Activated T-helper 1 cell treated with anti-CD3 and anti-CD28 coated beads, Interleukin-12 subunit alpha, Interleukin-12 subunit beta, Interleukin-2, Interleukin-4 antibody, amounts not matched to agents 30 ng/mL and 10 ng/mL and 1 ng/mL, durations not matched to agents 14 hours and 24 hours and 36 hours (primary cell): ENCODE measurements at regions of chr12 and their contacts with region 1.

Region 1: DNA sequence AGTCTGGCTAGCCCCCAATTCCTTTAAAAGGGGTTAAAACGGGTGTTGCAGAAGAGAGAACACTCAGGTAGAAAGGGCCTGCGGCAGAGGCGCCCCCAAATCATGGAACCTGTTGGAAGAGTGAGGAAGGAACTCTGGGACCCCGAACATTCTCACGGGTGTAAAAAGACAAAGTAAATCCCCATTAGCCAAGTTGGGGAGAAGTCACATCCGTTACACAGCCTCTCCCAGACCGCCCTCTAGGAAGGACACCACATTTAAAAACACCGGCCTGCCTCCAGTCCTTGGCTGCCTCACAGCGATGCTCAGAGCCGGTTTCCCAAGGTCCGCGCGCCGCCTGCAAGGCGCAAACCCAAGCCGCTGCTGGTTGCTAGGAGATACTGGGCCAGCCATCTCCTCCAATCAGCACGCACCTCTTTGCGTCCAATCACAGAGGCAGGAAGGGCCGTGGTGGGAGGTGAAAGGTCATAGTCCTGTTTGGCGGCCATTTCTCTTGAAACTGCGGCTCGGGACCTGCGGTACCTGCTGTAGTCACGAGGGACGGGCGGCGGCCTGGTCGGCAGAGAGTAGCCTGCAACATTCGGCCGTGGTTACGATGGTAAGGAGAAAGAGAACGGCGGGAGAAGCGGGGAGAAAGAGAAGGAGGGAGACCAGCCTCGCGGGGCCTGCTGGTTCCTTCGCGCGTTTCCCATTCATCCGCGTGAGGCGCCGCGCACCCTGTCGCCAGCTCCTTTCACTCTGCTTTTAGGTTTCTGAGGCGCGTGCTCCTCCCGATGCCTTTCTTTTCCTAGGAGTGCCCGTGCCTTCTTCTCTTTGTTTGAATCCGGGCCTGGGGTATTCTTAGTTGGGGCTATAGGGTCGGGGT is at the start of gene SNRPF:
- DNase-seq: peak; percentile 93
- H3K4me3 Mint-ChIP-seq: no peak within 1 kb of the TSS
- H3K27ac Mint-ChIP-seq: no peak within 1 kb of the TSS
- H3K4me1 Mint-ChIP-seq: peaks cover 12% of the 10 kb centered on the region
- H3K27me3 Mint-ChIP-seq: peaks cover 5% of the 10 kb centered on the region
- total RNA-seq, gene SNRPF: 65.6 and 70.9 TPM in 2 replicates

Region 2: DNA sequence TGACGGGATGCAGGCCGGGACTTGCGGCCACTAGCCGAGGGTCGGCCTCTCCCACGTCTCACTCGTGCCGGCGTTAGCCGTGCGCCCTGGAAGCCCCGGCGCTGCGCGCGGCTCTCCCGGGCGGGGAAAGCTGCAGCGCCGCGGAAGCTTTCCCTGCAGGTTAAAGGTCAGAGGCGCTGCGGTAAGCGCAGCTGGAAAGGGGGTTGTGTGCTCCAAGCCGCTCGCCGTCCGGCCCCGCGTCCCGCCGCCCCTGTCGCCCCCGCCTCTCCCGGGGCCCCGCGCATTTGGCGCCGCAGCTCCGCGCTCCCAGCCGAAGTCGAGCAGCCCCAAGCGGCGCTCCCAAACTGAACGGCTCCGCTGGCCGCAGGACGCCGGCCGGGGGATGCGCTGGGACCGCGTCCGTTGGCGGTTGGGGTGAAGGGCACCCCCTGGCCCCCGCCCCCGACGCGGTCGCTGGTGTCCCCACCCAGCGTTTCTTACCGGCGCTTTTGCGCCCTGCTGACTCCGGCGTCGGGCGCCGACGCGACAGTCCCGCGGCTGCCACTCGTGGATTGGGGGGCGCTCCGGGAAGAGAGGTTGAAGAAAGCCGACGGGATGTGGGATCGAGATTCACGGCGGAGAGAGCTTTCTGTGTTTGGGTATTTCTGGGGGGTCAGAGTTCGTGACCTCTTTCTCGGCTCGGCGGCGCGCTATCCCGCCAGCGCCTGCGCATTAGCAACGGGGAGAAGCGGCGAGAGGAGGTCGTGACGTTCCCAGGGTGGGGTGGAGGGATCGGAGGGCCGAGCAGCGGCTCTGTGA is 785.6 kb before region 1 on chr12 and contains the start of gene NR2C1:
- intact Hi-C with region 1: loop called (anchors 1 kb)
- DNase-seq: peak; percentile 90
- H3K4me3 Mint-ChIP-seq: peak within 1 kb of the TSS; percentile 93
- H3K27ac Mint-ChIP-seq: peak within 1 kb of the TSS; percentile 92
- H3K4me1 Mint-ChIP-seq: peaks cover 16% of the 10 kb centered on the region
- H3K27me3 Mint-ChIP-seq: peaks cover 7% of the 10 kb centered on the region
- total RNA-seq, gene NR2C1: 26.1 and 27.3 TPM in 2 replicates

Region 3: GRCh38 chr12:95473884-95474659 is 384.6 kb before region 1 on chr12 and contains the start of gene METAP2:
- intact Hi-C with region 1: loop called (anchors 2 kb)
- DNase-seq: peak; percentile 86
- H3K4me3 Mint-ChIP-seq: peak within 1 kb of the TSS; percentile 100
- H3K27ac Mint-ChIP-seq: peak within 1 kb of the TSS; percentile 100
- H3K4me1 Mint-ChIP-seq: peaks cover 46% of the 10 kb centered on the region
- H3K27me3 Mint-ChIP-seq: no peaks in the 10 kb centered on the region
- total RNA-seq, gene METAP2: 118 and 121 TPM in 2 replicates

Region 4: DNA sequence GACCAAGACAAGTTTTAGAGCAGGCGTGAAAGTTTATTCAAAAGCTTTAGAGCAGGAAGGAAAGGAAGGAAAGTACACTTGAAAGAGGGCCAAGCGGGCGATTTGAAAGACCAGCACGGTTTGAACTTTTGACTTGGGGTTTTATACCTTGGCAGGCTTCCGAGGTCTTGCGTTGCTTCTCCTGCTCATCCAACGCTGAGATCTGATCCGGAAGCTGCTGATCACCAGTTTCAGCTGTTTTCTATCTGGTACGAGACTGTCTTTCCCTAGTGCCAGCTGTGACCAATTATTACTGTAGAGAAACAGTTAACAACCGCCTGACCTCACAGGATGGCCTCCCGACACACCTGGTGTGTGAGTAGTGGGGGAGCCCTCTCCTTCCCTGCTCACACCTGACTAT is 20.6 kb before region 1 on chr12:
- intact Hi-C with region 1: no loop called
- DNase-seq: no peak
- H3K4me3 Mint-ChIP-seq: no peak overlapping the region
- H3K27ac Mint-ChIP-seq: no peak overlapping the region
- H3K4me1 Mint-ChIP-seq: no peaks in the 10 kb centered on the region
- H3K27me3 Mint-ChIP-seq: peaks cover 19% of the 10 kb centered on the region

Region 5: GRCh38 chr12:95870897-95871296 is 12.2 kb after region 1 on chr12:
- intact Hi-C with region 1: loop called (anchors 1 kb)
- DNase-seq: no peak
- H3K4me3 Mint-ChIP-seq: no peak overlapping the region
- H3K27ac Mint-ChIP-seq: no peak overlapping the region
- H3K4me1 Mint-ChIP-seq: peaks cover 16% of the 10 kb centered on the region
- H3K27me3 Mint-ChIP-seq: no peaks in the 10 kb centered on the region

Region 6: GRCh38 chr12:96035278-96036236 is 176.8 kb after region 1 on chr12 and contains the start of gene LTA4H:
- intact Hi-C with region 1: loop called (anchors 1 kb)
- DNase-seq: peak; percentile 93
- H3K4me3 Mint-ChIP-seq: no peak within 1 kb of the TSS
- H3K27ac Mint-ChIP-seq: no peak within 1 kb of the TSS
- H3K4me1 Mint-ChIP-seq: peaks cover 10% of the 10 kb centered on the region
- H3K27me3 Mint-ChIP-seq: no peaks in the 10 kb centered on the region
- total RNA-seq, gene LTA4H: 57.3 and 59.6 TPM in 2 replicates

Region 7: DNA sequence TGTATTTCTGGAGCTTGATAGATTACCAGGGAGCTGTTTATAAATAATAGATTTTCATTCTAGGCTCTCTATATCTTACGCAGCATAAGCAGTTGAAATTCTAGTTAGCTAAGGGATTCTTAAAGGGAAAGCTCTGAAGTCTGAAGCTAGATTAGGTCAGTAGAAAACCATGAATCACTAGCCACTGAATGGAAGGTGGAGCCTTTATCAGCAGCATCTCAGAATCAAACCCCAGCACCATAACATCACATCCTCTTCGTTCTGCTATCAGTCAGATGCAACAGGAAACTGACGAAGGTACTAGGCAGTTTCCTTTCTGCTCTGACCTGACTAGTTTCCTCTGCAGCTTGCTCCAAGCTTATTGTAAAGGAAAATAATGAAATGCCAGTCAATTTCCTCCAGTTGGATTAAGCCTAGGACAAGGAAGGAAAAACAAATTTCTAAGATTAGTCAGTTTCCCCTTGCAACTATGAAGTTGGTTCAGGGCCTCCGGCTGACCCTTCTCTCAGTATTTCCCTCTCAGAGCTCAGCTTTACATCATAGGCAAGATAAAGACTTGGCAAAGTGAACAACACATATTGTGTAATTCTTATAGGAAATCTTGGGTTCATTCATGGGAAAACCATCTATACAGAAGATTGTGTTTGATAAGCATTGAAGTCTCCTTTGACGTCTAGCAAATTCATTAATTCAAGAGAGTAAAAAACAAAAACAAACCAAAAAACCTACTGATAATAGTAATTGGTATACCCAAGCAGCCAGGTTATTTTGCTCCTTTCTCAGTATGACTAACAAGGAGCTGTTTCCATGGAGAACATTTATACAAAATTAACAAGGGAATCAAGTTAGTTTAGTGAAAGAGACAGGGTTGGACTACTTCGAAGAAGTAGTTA is 587.2 kb after region 1 on chr12:
- intact Hi-C with region 1: loop called (anchors 5 kb)
- DNase-seq: peak; percentile 70
- H3K4me3 Mint-ChIP-seq: peak overlapping the region; percentile 48
- H3K27ac Mint-ChIP-seq: peak overlapping the region; percentile 96
- H3K4me1 Mint-ChIP-seq: peaks cover 51% of the 10 kb centered on the region
- H3K27me3 Mint-ChIP-seq: no peaks in the 10 kb centered on the region